ENCODE measurements at regions of chr1 and their contacts with region 1.

Region 1: GRCh38 chr1:244231572-244232315 is 180.7 kb downstream of the ZBTB18 start:
- DNase-seq: peak; percentile 85 to 93
- ATAC-seq: peak; percentile 84 to 89
- H3K4me3 ChIP-seq: peak overlapping the region; percentile 38 to 56 (median 52)
- H3K27ac ChIP-seq: peak overlapping the region; percentile 85 to 94 (median 92)
- H3K4me1 ChIP-seq: peaks cover 15 to 23% of the 10 kb centered on the region in 2 donors
- H3K27me3 ChIP-seq: no peaks in the 10 kb centered on the region
- CTCF ChIP-seq: no peak
- POLR2A ChIP-seq: peak in 1 of 2 donors; percentile 30

Region 2: GRCh38 chr1:244092293-244092963 is 139.3 kb before region 1 on chr1:
- in situ Hi-C with region 1: no loop called
- intact Hi-C with region 1: no loop called
- DNase-seq: no peak
- ATAC-seq: no peak
- H3K4me3 ChIP-seq: no peak overlapping the region
- H3K27ac ChIP-seq: no peak overlapping the region
- H3K4me1 ChIP-seq: no peaks in the 10 kb centered on the region
- H3K27me3 ChIP-seq: peaks cover 0 to 5% (median 0%) of the 10 kb centered on the region in 3 donors
- CTCF ChIP-seq: no peak
- POLR2A ChIP-seq: no peak

Region 3: GRCh38 chr1:244154872-244155531 is 76.7 kb before region 1 on chr1:
- in situ Hi-C with region 1: no loop called
- intact Hi-C with region 1: loop called (anchors 1 kb)
- DNase-seq: peak; percentile 56 to 84
- ATAC-seq: peak; percentile 96
- H3K4me3 ChIP-seq: peak overlapping the region; percentile 29 to 39 (median 35)
- H3K27ac ChIP-seq: peak overlapping the region; percentile 76 to 86 (median 78)
- H3K4me1 ChIP-seq: peaks cover 7 to 8% of the 10 kb centered on the region in 2 donors
- H3K27me3 ChIP-seq: no peaks in the 10 kb centered on the region
- CTCF ChIP-seq: peak in 4 of 5 experiments; percentile 22 to 44 (median 31)
- POLR2A ChIP-seq: peak; percentile 56 to 71

Region 4: GRCh38 chr1:244341455-244342450 is 110.0 kb after region 1 on chr1:
- in situ Hi-C with region 1: no loop called
- intact Hi-C with region 1: no loop called
- DNase-seq: no peak
- ATAC-seq: no peak
- H3K4me3 ChIP-seq: no peak overlapping the region
- H3K27ac ChIP-seq: no peak overlapping the region
- H3K4me1 ChIP-seq: no peaks in the 10 kb centered on the region
- H3K27me3 ChIP-seq: no peaks in the 10 kb centered on the region
- CTCF ChIP-seq: no peak
- POLR2A ChIP-seq: no peak